HCT116 (cell line): ENCODE measurements at regions of chr12 and their contacts with region 1.

Region 1: DNA sequence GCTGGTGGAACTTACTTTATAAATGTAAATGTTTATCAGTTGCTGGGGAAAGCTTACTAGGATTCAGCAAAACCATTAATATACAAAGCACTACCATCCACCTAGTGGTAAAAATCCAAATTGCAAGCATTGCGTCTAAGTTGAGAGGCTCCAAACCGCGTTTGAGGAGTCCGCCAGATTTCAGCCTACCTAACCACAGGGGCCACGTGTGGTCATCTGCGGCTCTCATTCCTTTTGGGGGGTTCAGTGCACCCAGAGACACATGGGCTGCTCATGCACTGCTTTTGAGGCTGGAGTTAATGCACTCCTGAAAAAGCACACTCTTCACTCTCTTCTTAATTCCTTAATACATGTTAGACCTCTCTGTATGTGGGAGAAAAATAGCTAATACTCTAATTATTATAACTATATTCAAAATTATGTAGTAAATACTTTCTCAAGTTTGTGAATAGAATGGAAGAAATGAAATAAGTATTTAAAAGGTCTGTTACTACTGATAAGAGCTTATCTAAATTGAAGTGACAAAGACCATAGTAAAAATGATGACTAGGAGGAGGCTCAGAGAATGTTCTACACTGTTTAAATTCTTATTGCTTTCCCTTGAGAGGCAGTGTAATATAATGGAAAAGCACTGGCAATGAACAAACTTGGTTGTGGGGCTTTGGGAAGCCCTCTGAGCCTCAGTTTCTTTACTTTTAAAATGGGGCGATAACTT is 41.4 kb upstream of the MANSC4 start:
- DNase-seq: peak; percentile 77
- ATAC-seq: peak; percentile 90
- H3K4me3 ChIP-seq: no peak overlapping the region
- H3K27ac ChIP-seq: no peak overlapping the region
- H3K4me1 ChIP-seq: peaks cover 0 to 16% of the 10 kb centered on the region in 2 experiments; a peak in 2 of 4 replicates
- H3K27me3 ChIP-seq: no peaks in the 10 kb centered on the region
- CTCF ChIP-seq: peak; percentile 56 to 82 (median 70); a peak in 4 of 6 replicates
- POLR2A ChIP-seq: peak; percentile 12
- RAD21 ChIP-seq: peak; percentile 69

Region 2: GRCh38 chr12:26884765-26885576 is 936.4 kb before region 1 on chr12:
- CTCF ChIA-PET with region 1: no interaction called
- POLR2A ChIA-PET with region 1: no interaction called
- RAD21 ChIA-PET with region 1: no interaction called
- intact Hi-C with region 1: no loop called
- DNase-seq: peak; percentile 51
- ATAC-seq: peak; percentile 97
- H3K4me3 ChIP-seq: no peak overlapping the region
- H3K27ac ChIP-seq: no peak overlapping the region
- H3K4me1 ChIP-seq: peaks cover 2 to 7% of the 10 kb centered on the region in 2 experiments; a peak in 2 of 4 replicates
- H3K27me3 ChIP-seq: no peaks in the 10 kb centered on the region
- CTCF ChIP-seq: peak; percentile 77 to 97 (median 88)
- POLR2A ChIP-seq: no peak
- RAD21 ChIP-seq: peak; percentile 75

Region 3: DNA sequence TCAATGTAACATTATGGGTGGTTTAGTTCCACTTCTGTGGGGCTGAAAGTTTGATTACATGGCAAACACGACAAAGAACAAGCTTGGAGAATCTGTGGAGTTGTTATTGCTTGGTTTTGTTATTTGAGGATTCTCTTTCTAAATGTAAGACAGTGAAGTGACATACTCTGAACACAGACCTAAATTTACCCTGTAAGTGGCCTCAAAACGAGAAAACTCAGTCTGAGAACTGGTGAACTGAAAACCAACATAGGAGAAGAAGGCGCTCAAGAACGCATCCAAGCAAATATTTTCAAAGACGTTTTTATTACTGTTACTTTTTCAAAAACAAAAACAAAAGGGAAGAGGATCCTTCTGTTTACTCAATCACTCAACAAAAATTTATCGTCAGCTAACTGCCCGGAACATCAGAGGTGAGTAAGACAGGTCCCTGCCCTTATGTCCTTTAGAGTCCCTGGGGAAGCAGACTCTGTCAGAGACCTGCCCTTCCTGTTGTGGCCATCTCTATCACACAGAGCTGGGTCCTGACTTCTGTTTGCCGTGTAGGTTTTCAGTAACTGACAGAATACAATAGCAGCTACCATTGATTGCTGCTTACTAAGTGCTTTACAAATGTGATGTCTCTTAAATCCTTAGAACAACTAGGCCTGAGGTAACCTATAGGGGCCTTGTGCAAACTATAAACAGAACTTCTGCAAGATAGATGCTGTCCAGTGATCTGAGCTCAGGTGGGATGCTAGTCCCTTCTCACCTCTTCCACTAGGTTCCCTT is 659.8 kb before region 1 on chr12:
- CTCF ChIA-PET with region 1: no interaction called
- POLR2A ChIA-PET with region 1: no interaction called
- RAD21 ChIA-PET with region 1: no interaction called
- intact Hi-C with region 1: no loop called
- DNase-seq: no peak
- ATAC-seq: no peak
- H3K4me3 ChIP-seq: no peak overlapping the region
- H3K27ac ChIP-seq: no peak overlapping the region
- H3K4me1 ChIP-seq: peaks cover 0 to 9% of the 10 kb centered on the region in 2 experiments; a peak in 1 of 4 replicates
- H3K27me3 ChIP-seq: no peaks in the 10 kb centered on the region
- CTCF ChIP-seq: no peak
- POLR2A ChIP-seq: no peak
- RAD21 ChIP-seq: no peak

Region 4: GRCh38 chr12:27840244-27840999 is 19.0 kb after region 1 on chr12:
- CTCF ChIA-PET with region 1: interaction called, 11 read pairs
- POLR2A ChIA-PET with region 1: no interaction called
- RAD21 ChIA-PET with region 1: no interaction called
- intact Hi-C with region 1: no loop called
- DNase-seq: no peak
- ATAC-seq: no peak
- H3K4me3 ChIP-seq: no peak overlapping the region
- H3K27ac ChIP-seq: no peak overlapping the region
- H3K4me1 ChIP-seq: peaks cover 18% of the 10 kb centered on the region in 2 experiments
- H3K27me3 ChIP-seq: no peaks in the 10 kb centered on the region
- CTCF ChIP-seq: peak; percentile 31 to 66 (median 32); a peak in 5 of 6 replicates
- POLR2A ChIP-seq: no peak
- RAD21 ChIP-seq: peak; percentile 45